Astrocyte of the cerebellum (primary cell): ENCODE measurements at regions of chr7 and their contacts with region 1.

Region 1: DNA sequence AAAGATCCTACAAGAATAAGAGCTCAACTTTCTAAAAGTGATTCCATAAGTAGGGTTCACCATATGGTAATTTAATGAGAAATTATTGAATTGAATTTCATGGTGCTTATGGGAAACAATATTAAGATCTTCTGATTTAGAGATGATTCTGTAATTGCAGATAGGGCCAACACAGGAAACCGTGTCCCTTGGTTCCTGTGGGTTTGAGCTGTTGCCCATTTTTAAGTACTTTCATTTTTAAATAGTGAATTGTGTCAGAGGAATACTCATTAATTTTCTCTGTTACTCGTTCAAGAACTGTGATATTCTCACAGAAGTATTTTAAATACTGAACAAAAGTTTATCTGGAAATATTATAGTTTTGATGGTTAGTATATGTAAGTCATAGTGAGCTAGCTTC is 129.2 kb downstream of the SRI start:
- DNase-seq: no peak
- H3K4me3 ChIP-seq: no peak overlapping the region
- CTCF ChIP-seq: no peak

Region 2: DNA sequence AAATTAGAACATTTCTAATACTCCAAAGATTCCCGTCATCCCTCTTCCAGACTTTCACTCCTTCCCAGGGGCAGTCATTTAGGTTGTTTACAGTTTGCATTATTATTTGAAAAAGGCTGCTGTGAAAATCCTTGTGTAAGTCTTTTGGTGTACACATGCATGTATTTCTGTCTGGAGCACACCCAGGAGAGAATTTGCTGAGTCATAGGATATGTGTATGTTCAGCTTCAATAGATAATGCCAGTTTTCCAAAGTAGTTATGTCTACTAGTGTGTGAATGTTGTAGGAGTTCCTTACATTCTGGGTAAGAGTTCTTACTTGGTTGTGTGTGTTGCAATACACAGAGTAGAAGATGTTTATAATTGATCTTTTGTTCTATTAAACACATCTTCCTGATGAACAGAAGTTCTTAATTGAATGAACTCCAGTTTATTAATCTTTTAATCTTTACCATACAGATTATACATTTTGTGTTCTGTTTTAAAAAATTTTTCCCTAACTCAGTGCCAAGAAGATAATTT is 720.0 kb before region 1 on chr7:
- in situ Hi-C with region 1: no loop called
- DNase-seq: no peak
- H3K4me3 ChIP-seq: no peak overlapping the region
- CTCF ChIP-seq: no peak

Region 3: GRCh38 chr7:87926581-87927461 is 163.8 kb before region 1 on chr7:
- in situ Hi-C with region 1: no loop called
- DNase-seq: peak; percentile 97
- H3K4me3 ChIP-seq: no peak overlapping the region
- CTCF ChIP-seq: no peak

Region 4: GRCh38 chr7:88057655-88058054 is 33.0 kb before region 1 on chr7:
- in situ Hi-C with region 1: loop called (anchors 5 kb)
- DNase-seq: no peak
- H3K4me3 ChIP-seq: no peak overlapping the region
- CTCF ChIP-seq: no peak